ENCODE measurements at regions of chr2 and their contacts with region 1.

Region 1: DNA sequence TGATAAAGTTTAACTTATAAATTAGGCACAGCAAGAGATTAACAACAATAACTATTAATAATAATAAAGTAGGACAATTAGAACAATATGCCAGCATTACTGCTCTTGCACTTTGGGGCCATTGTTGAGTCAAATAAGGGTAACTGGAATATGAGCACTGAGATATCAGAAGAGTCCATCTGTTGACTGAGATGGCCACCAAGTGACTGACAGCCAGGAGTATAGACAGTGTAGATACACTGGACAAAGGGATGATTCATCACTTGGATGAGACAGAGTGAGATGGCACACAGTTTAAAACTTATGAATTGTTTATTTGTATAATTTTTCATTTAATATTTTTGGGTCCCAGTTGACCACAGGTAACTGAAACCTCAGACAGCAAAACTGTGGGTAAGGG is 20.0 kb downstream of the NAB1 start:
- DNase-seq: no peak
- ATAC-seq: peak; percentile 56; the same call in 1 of the 3 replicates
- H3K4me3 ChIP-seq: no peak overlapping the region
- H3K27ac ChIP-seq: no peak overlapping the region
- H3K4me1 ChIP-seq: no peaks in the 10 kb centered on the region
- H3K27me3 ChIP-seq: no peaks in the 10 kb centered on the region
- CTCF ChIP-seq: no peak
- EP300 ChIP-seq: no peak
- POLR2A ChIP-seq: no peak
- RAD21 ChIP-seq: no peak

Region 2: GRCh38 chr2:190486037-190486623 is 182.8 kb before region 1 on chr2:
- CTCF ChIA-PET with region 1: no interaction called
- POLR2A ChIA-PET with region 1: no interaction called
- in situ Hi-C with region 1: no loop called
- intact Hi-C with region 1: no loop called
- DNase-seq: no peak
- ATAC-seq: no peak
- H3K4me3 ChIP-seq: no peak overlapping the region
- H3K27ac ChIP-seq: no peak overlapping the region
- H3K4me1 ChIP-seq: no peaks in the 10 kb centered on the region
- H3K27me3 ChIP-seq: no peaks in the 10 kb centered on the region
- CTCF ChIP-seq: no peak
- EP300 ChIP-seq: no peak
- POLR2A ChIP-seq: no peak
- RAD21 ChIP-seq: no peak

Region 3: GRCh38 chr2:190695739-190696138 is 26.8 kb after region 1 on chr2:
- CTCF ChIA-PET with region 1: no interaction called
- POLR2A ChIA-PET with region 1: no interaction called
- in situ Hi-C with region 1: no loop called
- intact Hi-C with region 1: loop called (anchors 2 kb)
- DNase-seq: no peak
- ATAC-seq: no peak
- H3K4me3 ChIP-seq: no peak overlapping the region
- H3K27ac ChIP-seq: no peak overlapping the region
- H3K4me1 ChIP-seq: peaks cover 13% of the 10 kb centered on the region
- H3K27me3 ChIP-seq: peaks cover 0 to 2% of the 10 kb centered on the region in 2 experiments; a peak in 1 of 5 replicates
- CTCF ChIP-seq: no peak
- EP300 ChIP-seq: no peak
- POLR2A ChIP-seq: no peak
- RAD21 ChIP-seq: no peak

Region 4: GRCh38 chr2:190759749-190760213 is 90.9 kb after region 1 on chr2:
- CTCF ChIA-PET with region 1: no interaction called
- POLR2A ChIA-PET with region 1: no interaction called
- in situ Hi-C with region 1: no loop called
- intact Hi-C with region 1: no loop called
- DNase-seq: peak; percentile 49
- ATAC-seq: peak; percentile 49; the same call in 2 of the 3 replicates
- H3K4me3 ChIP-seq: no peak overlapping the region
- H3K27ac ChIP-seq: no peak overlapping the region
- H3K4me1 ChIP-seq: peaks cover 8% of the 10 kb centered on the region; the same call in 1 of the 2 replicates
- H3K27me3 ChIP-seq: no peaks in the 10 kb centered on the region
- CTCF ChIP-seq: no peak
- EP300 ChIP-seq: peak in 1 of 2 experiments; percentile 72; a peak in 1 of 4 replicates
- POLR2A ChIP-seq: no peak
- RAD21 ChIP-seq: no peak

Measured in HepG2 (cell line).